Natural killer cell (primary cell): ENCODE measurements at regions of chr1 and their contacts with region 1.

Region 1: GRCh38 chr1:160519642-160520435 is 3.2 kb downstream of the SLAMF6 start:
- DNase-seq: peak in 1 of 2 donors; percentile 70
- ATAC-seq: peak; percentile 59 to 73 (median 63)
- H3K4me3 ChIP-seq: peak overlapping the region; percentile 31
- H3K4me3 Mint-ChIP-seq: peak overlapping the region; percentile 93
- H3K27ac ChIP-seq: peak overlapping the region; percentile 90
- H3K27ac Mint-ChIP-seq: peak overlapping the region; percentile 93 to 96
- H3K4me1 ChIP-seq: peaks cover 15% of the 10 kb centered on the region
- H3K4me1 Mint-ChIP-seq: peaks cover 84 to 91% of the 10 kb centered on the region in 2 donors
- H3K27me3 ChIP-seq: no peaks in the 10 kb centered on the region
- H3K27me3 Mint-ChIP-seq: no peaks in the 10 kb centered on the region
- CTCF ChIP-seq: peak; percentile 26

Region 2: GRCh38 chr1:160539990-160540858 is 20.4 kb after region 1 on chr1:
- intact Hi-C with region 1: loop called (anchors 1 kb)
- DNase-seq: peak; percentile 46 to 80
- ATAC-seq: peak; percentile 89 to 96 (median 95)
- H3K4me3 ChIP-seq: no peak overlapping the region
- H3K4me3 Mint-ChIP-seq: peak overlapping the region; percentile 78
- H3K27ac ChIP-seq: peak overlapping the region; percentile 70
- H3K27ac Mint-ChIP-seq: peak overlapping the region; percentile 93 to 95
- H3K4me1 ChIP-seq: peaks cover 41% of the 10 kb centered on the region
- H3K4me1 Mint-ChIP-seq: peaks cover 57 to 58% of the 10 kb centered on the region in 2 donors
- H3K27me3 ChIP-seq: no peaks in the 10 kb centered on the region
- H3K27me3 Mint-ChIP-seq: no peaks in the 10 kb centered on the region
- CTCF ChIP-seq: no peak

Region 3: GRCh38 chr1:160567858-160568682 is 48.2 kb after region 1 on chr1:
- intact Hi-C with region 1: loop called (anchors 10 kb)
- DNase-seq: peak; percentile 26 to 78
- ATAC-seq: peak; percentile 85 to 90 (median 85)
- H3K4me3 ChIP-seq: no peak overlapping the region
- H3K4me3 Mint-ChIP-seq: peak overlapping the region; percentile 66
- H3K27ac ChIP-seq: peak overlapping the region; percentile 85
- H3K27ac Mint-ChIP-seq: peak overlapping the region; percentile 89 to 94
- H3K4me1 ChIP-seq: peaks cover 23% of the 10 kb centered on the region
- H3K4me1 Mint-ChIP-seq: peaks cover 35 to 46% of the 10 kb centered on the region in 2 donors
- H3K27me3 ChIP-seq: no peaks in the 10 kb centered on the region
- H3K27me3 Mint-ChIP-seq: no peaks in the 10 kb centered on the region
- CTCF ChIP-seq: no peak